HAP-1 (cell line): ENCODE measurements at regions of chr5 and their contacts with region 1.

Region 1: GRCh38 chr5:176543428-176544173 is 5.5 kb upstream of the CDHR2 start:
- DNase-seq: peak; percentile 67 to 86
- H3K4me3 ChIP-seq: peak overlapping the region; percentile 40
- H3K4me1 ChIP-seq: peaks cover 24% of the 10 kb centered on the region
- H3K27me3 ChIP-seq: no peaks in the 10 kb centered on the region

Region 2: DNA sequence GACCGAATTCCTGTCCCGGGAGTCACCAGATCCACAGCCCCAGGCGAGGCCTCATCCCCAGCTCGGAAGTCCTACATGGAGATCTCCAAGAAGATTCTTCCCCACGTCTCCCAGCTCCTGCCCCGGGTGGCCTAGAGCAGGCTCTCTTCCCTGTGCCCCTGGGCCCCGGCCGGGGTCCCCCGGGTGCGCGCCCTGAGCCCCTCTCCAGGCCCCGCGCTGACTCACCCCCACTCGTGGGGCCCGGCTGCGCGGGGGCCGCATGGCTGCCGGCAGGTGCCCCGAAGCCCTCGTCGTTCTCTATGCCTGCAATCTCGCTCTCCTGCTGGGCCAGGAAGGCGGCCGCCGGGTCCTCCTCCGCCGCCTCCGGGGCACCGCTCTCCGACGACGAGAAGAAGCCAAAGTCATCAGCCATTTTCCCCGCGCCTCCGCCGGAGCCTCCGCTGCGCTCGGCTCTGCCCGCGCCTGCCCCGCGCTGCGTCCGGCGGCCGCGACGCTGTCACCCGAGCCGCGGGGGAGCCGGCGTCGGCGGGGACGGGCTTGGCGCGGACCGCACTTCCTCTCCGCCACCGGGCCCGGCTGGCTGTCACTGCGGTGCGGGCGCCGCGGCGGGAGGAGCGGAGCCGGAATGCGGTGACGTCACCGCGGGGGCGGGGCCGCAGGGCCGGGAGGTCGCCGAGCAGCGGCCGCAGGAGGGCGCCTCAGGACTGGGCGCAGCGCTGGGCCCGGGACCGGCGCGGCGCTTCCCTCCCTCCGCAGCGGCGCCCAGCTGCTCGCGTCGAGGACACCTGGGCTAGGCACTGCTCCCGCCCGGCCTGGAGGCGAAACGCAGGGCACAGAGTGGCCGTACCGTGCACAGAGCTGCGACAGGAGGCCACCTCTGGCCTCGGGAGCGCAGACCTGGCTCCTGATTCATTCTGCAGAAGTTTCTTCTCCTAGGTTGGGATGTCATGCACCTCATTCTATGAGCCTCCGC is 127.4 kb before region 1 on chr5 and contains the start of gene CLTB:
- in situ Hi-C with region 1: loop called (anchors 10 kb)
- DNase-seq: peak; percentile 87 to 91
- H3K4me3 ChIP-seq: peak within 1 kb of the TSS; percentile 60
- H3K4me1 ChIP-seq: peaks cover 10% of the 10 kb centered on the region
- H3K27me3 ChIP-seq: no peaks in the 10 kb centered on the region

Region 3: GRCh38 chr5:176429972-176430371 is 113.6 kb before region 1 on chr5:
- in situ Hi-C with region 1: no loop called
- DNase-seq: no peak
- H3K4me3 ChIP-seq: no peak overlapping the region
- H3K4me1 ChIP-seq: peaks cover 13% of the 10 kb centered on the region
- H3K27me3 ChIP-seq: no peaks in the 10 kb centered on the region